Astrocyte of the cerebellum (primary cell): ENCODE measurements at regions of chr18 and their contacts with region 1.

Region 1: GRCh38 chr18:7164323-7165004 is 46.9 kb upstream of the LAMA1 start:
- DNase-seq: no peak
- H3K4me3 ChIP-seq: no peak overlapping the region
- CTCF ChIP-seq: peak; percentile 49

Region 2: DNA sequence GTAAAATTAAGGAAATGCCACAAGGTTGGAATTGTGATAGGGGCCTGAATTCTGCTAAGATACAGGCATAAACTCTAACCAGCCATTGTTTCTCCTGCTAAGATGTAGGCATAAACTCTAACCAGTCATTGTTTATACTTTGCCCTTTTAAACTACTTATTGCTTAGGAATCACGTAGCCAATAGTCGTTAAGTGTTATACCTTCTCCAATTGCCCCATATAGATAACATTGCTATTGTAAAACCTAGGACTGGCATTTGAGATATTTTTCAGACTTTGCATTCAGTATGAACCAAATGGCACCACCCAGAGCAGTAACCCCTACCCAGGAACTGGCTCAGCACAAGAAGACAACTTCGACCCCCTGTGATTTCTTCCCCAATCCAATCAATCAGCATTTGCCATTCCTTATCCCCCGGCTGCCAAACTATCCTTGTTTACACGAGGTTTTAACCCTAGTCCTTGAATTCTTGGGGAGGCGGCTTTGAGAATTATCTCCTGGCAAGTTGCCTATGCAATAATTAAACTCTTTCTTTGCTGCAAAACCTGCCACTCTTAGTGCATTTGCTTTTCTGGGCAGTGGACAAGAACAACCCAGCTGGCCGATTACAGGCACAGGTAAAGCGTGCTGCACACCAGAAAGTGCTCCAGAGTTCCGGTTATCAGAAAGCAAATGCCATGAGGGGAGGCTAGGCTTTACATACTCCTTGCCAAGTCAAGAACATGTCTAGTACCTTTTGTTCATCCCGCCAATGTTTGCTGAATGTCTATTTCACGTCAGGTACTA is 214.5 kb before region 1 on chr18:
- in situ Hi-C with region 1: loop called (anchors 10 kb)
- DNase-seq: no peak
- H3K4me3 ChIP-seq: no peak overlapping the region
- CTCF ChIP-seq: no peak

Region 3: GRCh38 chr18:7059276-7059675 is 105.2 kb before region 1 on chr18:
- in situ Hi-C with region 1: no loop called
- DNase-seq: no peak
- H3K4me3 ChIP-seq: no peak overlapping the region
- CTCF ChIP-seq: no peak

Region 4: DNA sequence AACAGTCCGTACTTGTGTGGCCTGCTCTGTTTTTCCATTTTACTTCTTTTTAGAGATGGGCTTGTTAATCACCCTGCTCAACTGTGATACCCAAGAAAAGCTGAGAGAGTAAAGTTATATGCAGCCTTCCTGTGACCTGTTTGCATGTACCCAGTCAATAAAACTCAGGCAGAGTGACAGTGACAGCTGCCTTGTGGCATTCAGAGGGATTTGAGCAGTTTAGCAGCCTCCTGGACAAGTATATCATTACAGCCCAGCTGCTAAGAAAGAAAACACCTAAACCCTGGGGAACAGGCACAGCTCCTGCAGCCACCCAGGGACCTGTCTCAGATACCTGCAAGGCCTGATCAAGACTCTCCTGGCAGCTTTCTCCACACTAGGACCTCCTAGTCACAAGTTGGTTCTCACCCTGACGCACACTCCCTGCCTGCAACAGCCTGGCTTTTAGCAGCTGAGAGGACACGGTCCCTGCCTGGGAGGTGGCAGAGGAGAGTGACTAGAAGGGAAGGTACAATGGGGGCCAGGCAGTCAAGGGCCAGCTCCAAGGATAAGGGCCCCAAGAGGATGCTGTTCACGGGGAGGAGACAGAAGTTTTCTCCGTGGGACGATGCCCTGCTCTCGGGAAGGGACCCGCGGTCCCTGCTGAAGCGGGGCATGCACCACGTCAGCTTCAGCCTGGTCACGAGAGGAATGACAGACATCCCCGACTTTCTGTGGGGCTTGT is 66.3 kb after region 1 on chr18 and contains the start of gene LRRC30:
- in situ Hi-C with region 1: no loop called
- DNase-seq: no peak
- H3K4me3 ChIP-seq: no peak within 1 kb of the TSS
- CTCF ChIP-seq: no peak